ENCODE measurements at regions of chr20 and their contacts with region 1.

Region 1: DNA sequence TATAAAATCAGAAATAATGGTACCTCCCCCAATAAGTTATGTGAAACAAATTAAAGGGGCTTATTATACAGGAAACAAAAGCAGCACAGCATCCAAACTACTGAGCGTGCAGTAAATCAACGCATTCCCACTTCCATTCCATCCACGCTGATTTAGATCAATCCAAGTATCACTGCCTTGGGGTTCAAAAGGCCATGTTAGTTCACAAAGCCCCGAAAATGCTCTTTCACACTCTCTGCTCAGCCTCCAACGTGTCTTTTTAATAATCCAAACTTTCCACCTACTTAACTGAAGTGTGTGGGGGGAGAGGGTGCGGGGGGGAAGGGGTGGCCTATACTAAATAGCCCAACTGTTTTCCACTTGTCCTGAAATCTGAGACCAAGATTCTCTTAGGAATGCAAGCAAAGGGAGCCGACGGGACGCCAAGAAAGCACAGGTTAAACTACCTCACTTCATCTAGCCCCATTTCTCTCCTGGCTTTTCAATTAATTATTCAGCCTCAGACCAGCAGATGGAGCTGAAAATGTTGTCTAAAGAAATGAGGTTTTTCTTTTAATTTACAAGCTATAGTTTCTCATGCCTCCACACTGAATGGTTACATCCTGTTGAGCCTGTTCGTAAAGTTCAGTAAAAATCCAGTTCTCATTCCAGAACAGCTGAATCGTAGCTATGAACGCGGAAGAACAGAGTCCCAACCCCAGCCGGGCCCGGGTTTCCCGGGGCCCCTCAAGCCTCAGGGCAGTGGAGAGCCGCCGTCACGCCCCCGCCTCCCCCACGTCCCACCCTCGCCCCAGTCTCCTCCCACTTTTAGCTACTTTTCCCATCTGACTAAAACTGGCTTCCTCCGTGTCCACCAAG is 1.0 kb upstream of the NXT1 start:
- ATAC-seq: peak in 1 of 8 experiments; percentile 57
- H3K4me3 ChIP-seq: peak overlapping the region; percentile 77 to 98 (median 94)
- H3K27ac ChIP-seq: peak overlapping the region; percentile 90 to 95
- H3K4me1 ChIP-seq: peaks cover 12 to 16% of the 10 kb centered on the region in 2 donors

Region 2: DNA sequence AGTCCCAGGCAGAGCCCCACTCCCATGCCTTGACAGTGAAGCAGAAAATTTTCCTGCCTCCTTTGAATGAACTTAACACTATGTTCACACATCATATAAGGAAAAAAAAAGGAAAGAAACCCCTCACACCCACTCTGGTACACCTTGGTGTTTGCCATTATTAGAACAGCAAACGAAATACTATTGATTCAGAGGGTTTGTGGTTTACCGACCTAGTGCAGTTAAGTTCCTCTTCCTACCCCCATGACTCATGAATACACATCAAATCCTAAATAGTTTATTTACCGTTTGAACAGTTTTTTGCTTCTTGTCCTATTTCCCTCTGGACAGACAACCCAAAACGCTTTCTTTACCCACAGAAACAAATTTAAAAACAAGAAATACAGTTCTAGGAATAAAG is 1002.9 kb before region 1 on chr20:
- in situ Hi-C with region 1: loop called in 4 of 9 experiments (anchors 10 to 25 kb)
- ATAC-seq: no peak
- H3K4me3 ChIP-seq: no peak overlapping the region
- H3K27ac ChIP-seq: no peak overlapping the region
- H3K4me1 ChIP-seq: no peaks in the 10 kb centered on the region

Region 3: GRCh38 chr20:22691369-22692118 is 658.0 kb before region 1 on chr20:
- in situ Hi-C with region 1: loop called in 3 of 9 experiments (anchors 10 to 25 kb)
- ATAC-seq: peak; percentile 56 to 99 (median 96)
- H3K4me3 ChIP-seq: no peak overlapping the region
- H3K27ac ChIP-seq: no peak overlapping the region
- H3K4me1 ChIP-seq: peaks cover 0 to 4% of the 10 kb centered on the region in 2 donors

Region 4: DNA sequence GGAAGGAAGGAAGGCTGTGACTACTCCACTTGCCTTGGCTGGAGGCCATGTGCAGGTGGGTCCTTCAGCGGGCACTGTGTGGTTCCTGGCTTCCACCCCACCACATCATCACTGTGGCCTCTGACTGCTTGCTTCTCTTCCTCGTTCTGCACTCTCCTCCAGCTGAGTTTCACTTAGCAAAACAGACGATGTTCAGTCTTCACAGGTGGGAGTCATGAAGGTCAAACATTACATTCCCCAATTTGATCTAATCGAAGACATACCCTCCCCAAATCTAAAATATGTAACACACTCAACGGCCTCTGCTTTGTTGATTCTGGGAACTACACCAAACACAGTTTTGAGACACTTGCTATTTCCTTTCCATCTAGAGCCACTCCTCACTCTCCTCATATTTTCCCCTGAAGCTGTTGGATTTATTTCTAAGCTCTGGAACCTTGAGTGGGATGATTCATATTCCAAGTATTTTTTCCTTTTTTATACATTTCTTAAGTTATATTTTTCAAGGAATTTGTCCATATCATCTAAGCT is 632.7 kb before region 1 on chr20:
- in situ Hi-C with region 1: loop called in 1 of 9 experiments (anchors 25 kb)
- ATAC-seq: peak in 2 of 8 experiments; percentile 3 to 13
- H3K4me3 ChIP-seq: no peak overlapping the region
- H3K27ac ChIP-seq: no peak overlapping the region
- H3K4me1 ChIP-seq: no peaks in the 10 kb centered on the region

Region 5: GRCh38 chr20:22836877-22837276 is 512.7 kb before region 1 on chr20:
- in situ Hi-C with region 1: loop called in 1 of 9 experiments (anchors 25 kb)
- ATAC-seq: peak in 2 of 8 experiments; percentile 61 to 66
- H3K4me3 ChIP-seq: no peak overlapping the region
- H3K27ac ChIP-seq: no peak overlapping the region
- H3K4me1 ChIP-seq: no peaks in the 10 kb centered on the region

Region 6: DNA sequence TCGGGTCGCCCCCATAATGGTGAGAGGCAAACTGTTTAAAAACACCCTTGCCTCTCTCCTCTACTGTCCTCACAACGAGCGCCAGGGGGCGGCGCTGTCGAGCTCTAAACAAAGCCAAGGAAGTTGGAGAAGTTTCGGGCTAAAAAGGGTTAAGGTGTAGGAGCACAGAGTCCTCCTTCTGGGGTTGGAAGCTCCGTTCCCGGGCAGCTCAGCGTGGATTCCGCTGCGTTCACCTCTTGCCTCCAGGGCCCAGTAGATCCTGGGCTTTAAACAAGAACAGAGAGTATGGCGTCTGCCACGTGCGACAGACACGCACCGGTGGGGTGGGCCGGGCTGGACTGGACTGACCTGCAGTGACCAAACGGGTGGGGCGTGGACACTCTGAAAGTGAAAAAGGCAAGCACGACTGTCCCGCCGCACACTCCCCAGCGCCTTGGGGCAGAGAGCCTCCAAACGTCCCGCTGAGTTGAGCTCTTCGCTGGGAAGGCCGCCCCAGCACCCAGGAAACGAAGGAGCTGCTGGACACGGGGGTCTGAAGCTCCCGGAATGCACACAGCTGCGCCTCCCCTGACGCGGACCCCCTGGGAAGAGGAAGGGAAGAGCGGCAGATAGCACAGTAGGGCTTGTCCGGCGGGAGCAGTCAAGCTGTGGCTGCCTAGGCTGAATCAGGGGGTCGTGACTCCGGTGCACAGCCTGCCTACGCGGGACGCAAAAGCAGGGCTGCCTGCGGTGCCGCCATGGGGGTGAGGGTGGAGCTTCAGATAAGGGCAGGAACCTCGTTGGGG is 298.5 kb before region 1 on chr20:
- in situ Hi-C with region 1: loop called in 3 of 9 experiments (anchors 10 to 25 kb)
- ATAC-seq: peak; percentile 30 to 75 (median 48)
- H3K4me3 ChIP-seq: peak overlapping the region in 3 of 5 donors; percentile 23 to 28 (median 24)
- H3K27ac ChIP-seq: no peak overlapping the region
- H3K4me1 ChIP-seq: peaks cover 0 to 14% of the 10 kb centered on the region in 2 donors

Region 7: GRCh38 chr20:23435626-23436539 is 86.3 kb after region 1 on chr20:
- in situ Hi-C with region 1: no loop called
- ATAC-seq: peak in 2 of 8 experiments; percentile 65 to 75
- H3K4me3 ChIP-seq: no peak overlapping the region
- H3K27ac ChIP-seq: no peak overlapping the region
- H3K4me1 ChIP-seq: no peaks in the 10 kb centered on the region

Region 8: GRCh38 chr20:24795436-24795835 is 1445.9 kb after region 1 on chr20:
- in situ Hi-C with region 1: no loop called
- ATAC-seq: no peak
- H3K4me3 ChIP-seq: no peak overlapping the region
- H3K27ac ChIP-seq: no peak overlapping the region
- H3K4me1 ChIP-seq: no peaks in the 10 kb centered on the region